A549 (cell line): ENCODE measurements at regions of chr12 and their contacts with region 1.

Region 1: GRCh38 chr12:57452937-57453509 is 2.1 kb upstream of the INHBE start:
- DNase-seq: peak; percentile 65 to 84
- ATAC-seq: peak; percentile 54 to 74
- H3K4me3 ChIP-seq: no peak overlapping the region
- H3K27ac ChIP-seq: peak overlapping the region; percentile 92 to 99
- H3K4me1 ChIP-seq: peaks cover 68% of the 10 kb centered on the region
- CTCF ChIP-seq: peak; percentile 94
- EP300 ChIP-seq: no peak
- POLR2A ChIP-seq: no peak
- RAD21 ChIP-seq: peak; percentile 98 to 99

Region 2: DNA sequence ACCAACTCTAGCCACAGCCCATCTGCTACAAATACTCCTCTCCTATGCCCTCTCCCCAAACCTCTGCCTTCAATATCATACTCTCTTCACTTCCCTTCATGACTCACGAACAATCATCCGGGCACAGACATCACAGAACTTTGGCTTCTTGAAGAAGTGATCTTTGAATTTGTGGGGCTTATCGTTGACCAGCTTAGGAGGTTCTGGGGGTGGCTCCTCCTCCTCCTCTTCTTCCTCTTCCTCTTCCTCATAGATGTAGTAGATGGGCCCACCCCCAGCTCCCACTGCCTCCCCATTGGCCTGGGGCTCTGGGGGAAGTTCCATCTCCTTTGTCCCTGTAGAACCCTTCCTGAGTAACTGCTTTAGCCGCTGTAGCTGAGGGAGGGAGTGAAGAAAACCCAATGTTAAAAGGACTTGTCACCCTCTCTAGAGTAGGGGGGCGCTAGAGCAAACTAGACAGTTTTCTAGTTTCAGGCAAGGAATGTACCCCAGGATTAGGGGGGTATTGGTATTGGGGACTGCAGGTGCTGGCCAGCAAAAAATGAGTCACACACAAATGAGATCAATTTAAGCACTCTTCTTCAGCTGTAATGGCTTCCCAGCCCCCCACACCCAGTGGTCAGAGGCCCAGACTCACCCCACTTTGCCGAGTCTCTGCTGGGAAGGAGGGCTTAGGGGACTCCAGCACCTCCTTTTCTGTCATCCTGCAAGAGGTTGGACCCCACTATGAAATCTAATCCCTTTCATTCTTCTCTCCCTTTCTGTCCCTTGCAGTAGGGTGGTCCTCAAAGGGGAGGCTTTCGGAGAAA is 203.9 kb before region 1 on chr12:
- CTCF ChIA-PET with region 1: interaction called, 98 read pairs
- POLR2A ChIA-PET with region 1: no interaction called
- DNase-seq: no peak
- ATAC-seq: no peak
- H3K4me3 ChIP-seq: no peak overlapping the region
- H3K27ac ChIP-seq: no peak overlapping the region
- H3K4me1 ChIP-seq: peaks cover 4% of the 10 kb centered on the region; the same call in 1 of the 3 replicates
- CTCF ChIP-seq: no peak
- EP300 ChIP-seq: no peak
- POLR2A ChIP-seq: no peak
- RAD21 ChIP-seq: no peak

Region 3: DNA sequence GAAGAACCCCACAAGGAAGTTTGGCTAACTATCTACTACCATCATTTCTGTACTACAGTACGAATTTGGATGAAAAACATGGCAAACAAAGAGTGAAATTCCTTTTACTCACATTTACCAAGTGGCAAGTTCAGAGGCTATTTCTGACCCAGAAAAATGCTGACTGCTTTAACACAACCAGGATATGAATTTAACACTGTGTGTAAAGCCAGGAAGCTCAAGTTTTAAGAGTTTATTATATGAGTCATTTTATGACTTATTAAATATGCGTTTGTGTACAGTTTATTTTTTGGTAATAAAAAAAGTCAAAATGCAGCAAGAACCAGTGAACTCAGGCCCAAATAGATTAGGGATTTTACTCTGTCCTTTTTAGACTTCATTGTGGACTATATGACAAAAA is 143.6 kb before region 1 on chr12:
- CTCF ChIA-PET with region 1: interaction called, 459 read pairs
- POLR2A ChIA-PET with region 1: interaction called, 5 read pairs
- DNase-seq: peak in 1 of 2 experiments; percentile 43
- ATAC-seq: peak; percentile 26 to 61; a peak in 4 of 6 replicates
- H3K4me3 ChIP-seq: no peak overlapping the region
- H3K27ac ChIP-seq: peak overlapping the region; percentile 58 to 76
- H3K4me1 ChIP-seq: peaks cover 30% of the 10 kb centered on the region
- CTCF ChIP-seq: no peak
- EP300 ChIP-seq: no peak
- POLR2A ChIP-seq: no peak
- RAD21 ChIP-seq: no peak

Region 4: DNA sequence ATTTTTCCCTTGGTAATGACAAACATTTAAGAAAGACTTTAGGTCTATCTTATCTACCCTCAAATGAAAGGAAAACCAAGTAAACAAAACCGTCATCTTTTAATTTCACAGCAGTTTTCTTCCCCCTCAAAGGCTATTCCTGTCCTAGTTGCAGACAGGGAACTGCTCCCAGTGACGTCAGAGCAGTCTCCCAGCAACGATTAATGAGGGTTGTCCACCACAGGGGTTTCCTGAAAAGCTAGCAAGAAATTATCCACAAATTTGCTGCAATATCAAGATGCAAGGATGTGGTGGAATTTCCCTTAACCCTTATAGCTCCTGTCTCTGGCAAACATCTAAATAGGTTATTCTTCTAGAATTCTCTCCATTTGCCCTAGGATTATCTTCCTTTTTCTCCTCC is 112.9 kb before region 1 on chr12:
- CTCF ChIA-PET with region 1: interaction called, 38 read pairs
- POLR2A ChIA-PET with region 1: interaction called, 3 read pairs
- DNase-seq: peak; percentile 41 to 71
- ATAC-seq: peak in 1 of 2 experiments; percentile 65; a peak in 4 of 6 replicates
- H3K4me3 ChIP-seq: no peak overlapping the region
- H3K27ac ChIP-seq: peak overlapping the region in 1 of 2 experiments; percentile 15; a peak in 1 of 6 replicates
- H3K4me1 ChIP-seq: peaks cover 34% of the 10 kb centered on the region
- CTCF ChIP-seq: no peak
- EP300 ChIP-seq: no peak
- POLR2A ChIP-seq: no peak
- RAD21 ChIP-seq: no peak

Region 5: GRCh38 chr12:57389033-57389432 is 64.0 kb before region 1 on chr12:
- CTCF ChIA-PET with region 1: interaction called, 15 read pairs
- POLR2A ChIA-PET with region 1: interaction called, 3 read pairs
- DNase-seq: peak; percentile 76 to 81
- ATAC-seq: peak; percentile 97 to 99
- H3K4me3 ChIP-seq: no peak overlapping the region
- H3K27ac ChIP-seq: peak overlapping the region; percentile 66 to 80
- H3K4me1 ChIP-seq: peaks cover 31% of the 10 kb centered on the region
- CTCF ChIP-seq: no peak
- EP300 ChIP-seq: peak in 1 of 2 experiments; percentile 54; a peak in 1 of 5 replicates
- POLR2A ChIP-seq: no peak
- RAD21 ChIP-seq: 0 out of 5 replicates have a peak, but pooled peaks of 1 of the 2 experiments have one; percentile 25

Region 6: DNA sequence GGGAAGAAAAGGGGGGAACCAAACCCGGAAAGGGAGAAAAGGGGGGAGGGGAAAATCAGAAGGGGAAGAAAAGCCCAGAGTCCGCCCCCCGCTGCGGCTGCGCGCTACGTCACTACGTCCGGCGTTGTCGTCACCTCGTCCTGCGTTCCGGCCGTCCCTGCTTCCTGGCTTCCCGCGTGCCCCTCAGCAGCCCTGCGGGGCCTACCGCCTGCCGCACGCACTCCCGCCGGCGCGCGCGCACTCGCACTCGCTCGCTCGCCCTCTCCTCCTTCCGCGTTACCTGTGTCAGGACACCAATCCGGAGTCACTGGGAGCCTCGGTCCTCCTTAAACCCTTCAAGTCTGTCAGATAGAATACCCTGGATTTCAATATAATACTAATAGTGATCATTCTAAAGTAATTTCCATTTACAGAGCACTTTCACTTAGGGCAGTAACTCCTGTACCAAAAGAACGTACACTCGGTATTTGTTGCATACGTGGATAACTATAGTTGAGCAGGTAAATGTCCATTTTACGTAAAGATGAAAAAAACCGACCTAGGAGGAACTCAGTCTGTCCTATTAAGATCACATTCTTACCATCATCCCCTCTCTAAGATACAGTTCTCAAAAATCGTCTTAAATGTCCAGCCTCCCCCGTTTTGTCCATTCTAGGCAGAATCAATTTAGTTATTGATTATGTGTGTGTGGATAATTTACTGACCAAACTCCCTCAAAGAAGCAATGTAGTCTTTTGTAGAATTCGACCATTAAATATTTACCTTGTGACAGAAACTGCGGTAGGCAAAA is 21.9 kb before region 1 on chr12 and contains the start of gene R3HDM2:
- CTCF ChIA-PET with region 1: interaction called, 32 read pairs
- POLR2A ChIA-PET with region 1: interaction called, 4 read pairs
- DNase-seq: peak; percentile 97 to 98
- ATAC-seq: peak; percentile 96 to 97
- H3K4me3 ChIP-seq: peak within 1 kb of the TSS; percentile 53
- H3K27ac ChIP-seq: peak within 1 kb of the TSS; percentile 96 to 98
- H3K4me1 ChIP-seq: peaks cover 24% of the 10 kb centered on the region; the same call in 2 of the 3 replicates
- CTCF ChIP-seq: no peak
- EP300 ChIP-seq: peak in 1 of 2 experiments; percentile 30; a peak in 1 of 5 replicates
- POLR2A ChIP-seq: peak; percentile 94
- RAD21 ChIP-seq: no peak; a peak in 1 of 5 replicates
- polyA plus RNA-seq, gene R3HDM2: 28.8 and 30.6 TPM in 2 replicates